Left ventricle myocardium inferior (tissue), 1 donor: ENCODE measurements at regions of chr16 and their contacts with region 1.

Region 1: GRCh38 chr16:56506941-56507340 is 12.9 kb downstream of the BBS2 start:
- DNase-seq: no peak
- H3K4me3 ChIP-seq: no peak overlapping the region
- H3K27ac ChIP-seq: peak overlapping the region; percentile 25
- H3K4me1 ChIP-seq: peaks cover 7% of the 10 kb centered on the region
- H3K27me3 ChIP-seq: no peaks in the 10 kb centered on the region
- CTCF ChIP-seq: no peak

Region 2: GRCh38 chr16:56370877-56371659 is 135.9 kb before region 1 on chr16:
- intact Hi-C with region 1: no loop called
- DNase-seq: no peak
- H3K4me3 ChIP-seq: no peak overlapping the region
- H3K27ac ChIP-seq: peak overlapping the region; percentile 30
- H3K4me1 ChIP-seq: peaks cover 20% of the 10 kb centered on the region
- H3K27me3 ChIP-seq: no peaks in the 10 kb centered on the region
- CTCF ChIP-seq: no peak

Region 3: GRCh38 chr16:56637814-56638750 is 131.1 kb after region 1 on chr16 and contains the start of gene MT1A:
- intact Hi-C with region 1: no loop called
- DNase-seq: peak; percentile 83
- H3K4me3 ChIP-seq: peak within 1 kb of the TSS; percentile 70
- H3K27ac ChIP-seq: peak within 1 kb of the TSS; percentile 81
- H3K4me1 ChIP-seq: peaks cover 28% of the 10 kb centered on the region
- H3K27me3 ChIP-seq: peaks cover 80% of the 10 kb centered on the region
- CTCF ChIP-seq: no peak
- total RNA-seq, gene MT1A: 1.2 TPM

Region 4: DNA sequence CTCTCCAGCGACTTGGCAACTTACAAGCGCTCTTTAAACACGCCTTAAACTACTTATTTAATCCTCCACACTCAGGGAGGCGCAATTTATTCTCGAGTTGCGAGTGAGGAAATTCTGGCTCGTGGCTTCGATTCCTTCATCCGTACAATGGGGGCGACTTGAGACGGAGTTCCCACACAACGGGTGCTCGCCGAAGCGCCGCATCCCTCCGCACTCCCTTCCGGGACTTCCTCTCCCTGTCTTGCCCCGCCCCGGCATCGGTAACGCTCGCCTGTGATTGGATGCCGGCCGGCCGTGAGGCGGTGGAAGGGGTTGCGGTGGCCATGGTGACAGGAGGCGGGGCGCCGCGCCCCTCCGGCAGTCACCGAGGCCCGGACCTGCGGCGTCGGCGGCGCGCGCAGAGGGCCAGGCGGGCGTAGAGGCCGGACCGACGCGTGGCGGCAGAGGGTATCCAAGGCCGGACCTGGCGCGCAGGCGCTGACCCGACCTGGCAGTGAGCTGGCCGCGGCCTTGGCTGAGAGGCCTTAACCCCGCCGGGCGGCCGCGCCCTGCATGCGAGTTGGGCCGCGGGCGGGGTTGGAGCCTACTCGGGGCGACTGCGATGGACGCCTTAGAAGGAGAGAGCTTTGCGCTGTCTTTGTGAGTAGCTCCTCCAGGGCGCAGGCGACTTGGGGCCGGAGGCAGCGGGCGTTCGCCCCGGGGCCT is 738.0 kb after region 1 on chr16 and contains the start of gene ARL2BP:
- intact Hi-C with region 1: loop called (anchors 10 kb)
- DNase-seq: peak; percentile 99
- H3K4me3 ChIP-seq: peak within 1 kb of the TSS; percentile 95
- H3K27ac ChIP-seq: peak within 1 kb of the TSS; percentile 98
- H3K4me1 ChIP-seq: peaks cover 29% of the 10 kb centered on the region
- H3K27me3 ChIP-seq: no peaks in the 10 kb centered on the region
- CTCF ChIP-seq: no peak
- total RNA-seq, gene ARL2BP: 57.8 TPM